Activated CD4-positive, alpha-beta memory T cell treated with anti-CD3 and anti-CD28 coated beads, Interleukin-2, amount 10 ng/mL, durations not matched to agents 7 days and 5 days (primary cell): ENCODE measurements at regions of chr7 and their contacts with region 1.

Region 1: GRCh38 chr7:142301923-142302550 is 44.2 kb upstream of the PRSS58 start:
- DNase-seq: no peak
- H3K4me3 Mint-ChIP-seq: no peak overlapping the region
- H3K27ac Mint-ChIP-seq: no peak overlapping the region
- H3K4me1 Mint-ChIP-seq: peaks cover 6% of the 10 kb centered on the region
- H3K27me3 Mint-ChIP-seq: peaks cover 16% of the 10 kb centered on the region

Region 2: DNA sequence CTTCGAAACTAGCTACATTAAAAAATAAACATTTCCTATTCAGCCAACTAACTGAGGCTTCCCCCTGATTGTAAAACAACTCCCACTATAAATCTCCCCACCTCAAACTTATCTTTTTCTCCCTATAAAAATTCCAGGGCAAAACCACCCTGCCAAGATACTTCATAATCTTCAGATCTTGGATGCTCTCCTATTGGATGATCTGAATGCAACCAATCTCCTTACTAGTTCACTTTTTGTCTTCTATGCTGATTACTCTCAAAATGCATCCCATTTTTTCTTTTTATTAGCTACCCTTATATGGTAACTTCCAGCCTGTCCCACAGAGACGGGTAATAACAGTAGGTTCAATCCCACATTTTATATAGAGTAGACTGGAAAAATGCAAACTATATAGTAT is 29.2 kb before region 1 on chr7:
- CTCF ChIA-PET with region 1: no interaction called
- POLR2A ChIA-PET with region 1: no interaction called
- DNase-seq: no peak
- H3K4me3 Mint-ChIP-seq: no peak overlapping the region
- H3K27ac Mint-ChIP-seq: no peak overlapping the region
- H3K4me1 Mint-ChIP-seq: no peaks in the 10 kb centered on the region
- H3K27me3 Mint-ChIP-seq: peaks cover 27% of the 10 kb centered on the region

Region 3: DNA sequence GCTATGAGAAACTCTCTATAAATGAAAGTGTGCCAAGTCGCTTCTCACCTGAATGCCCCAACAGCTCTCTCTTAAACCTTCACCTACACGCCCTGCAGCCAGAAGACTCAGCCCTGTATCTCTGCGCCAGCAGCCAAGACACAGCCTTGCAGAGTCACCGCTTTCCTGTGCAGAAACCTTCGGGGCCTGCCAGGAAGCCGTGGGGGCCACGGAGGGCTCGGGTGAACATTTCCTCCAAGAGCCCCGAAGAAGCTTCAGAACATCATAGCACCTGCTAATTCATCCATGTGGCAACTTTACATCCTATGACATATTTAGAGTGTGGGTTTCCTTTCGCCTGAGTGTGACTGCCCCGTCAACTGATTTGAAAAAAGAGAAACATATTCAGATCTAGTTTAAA is 11.5 kb after region 1 on chr7:
- CTCF ChIA-PET with region 1: interaction called, 27 read pairs
- POLR2A ChIA-PET with region 1: no interaction called
- DNase-seq: no peak
- H3K4me3 Mint-ChIP-seq: peak overlapping the region; percentile 5
- H3K27ac Mint-ChIP-seq: no peak overlapping the region
- H3K4me1 Mint-ChIP-seq: peaks cover 7% of the 10 kb centered on the region
- H3K27me3 Mint-ChIP-seq: peaks cover 27% of the 10 kb centered on the region

Region 4: GRCh38 chr7:142323706-142324105 is 21.7 kb after region 1 on chr7:
- CTCF ChIA-PET with region 1: interaction called, 27 read pairs
- POLR2A ChIA-PET with region 1: no interaction called
- DNase-seq: peak; percentile 48
- H3K4me3 Mint-ChIP-seq: no peak overlapping the region
- H3K27ac Mint-ChIP-seq: no peak overlapping the region
- H3K4me1 Mint-ChIP-seq: peaks cover 19% of the 10 kb centered on the region
- H3K27me3 Mint-ChIP-seq: peaks cover 10% of the 10 kb centered on the region

Region 5: GRCh38 chr7:142345811-142346210 is 43.8 kb after region 1 on chr7:
- CTCF ChIA-PET with region 1: interaction called, 12 read pairs
- POLR2A ChIA-PET with region 1: no interaction called
- DNase-seq: no peak
- H3K4me3 Mint-ChIP-seq: no peak overlapping the region
- H3K27ac Mint-ChIP-seq: peak overlapping the region; percentile 56
- H3K4me1 Mint-ChIP-seq: peaks cover 5% of the 10 kb centered on the region
- H3K27me3 Mint-ChIP-seq: peaks cover 3% of the 10 kb centered on the region

Region 6: GRCh38 chr7:142689439-142690120 is 387.5 kb after region 1 on chr7:
- CTCF ChIA-PET with region 1: no interaction called
- POLR2A ChIA-PET with region 1: no interaction called
- DNase-seq: no peak
- H3K4me3 Mint-ChIP-seq: no peak overlapping the region
- H3K27ac Mint-ChIP-seq: peak overlapping the region; percentile 77
- H3K4me1 Mint-ChIP-seq: peaks cover 41% of the 10 kb centered on the region
- H3K27me3 Mint-ChIP-seq: no peaks in the 10 kb centered on the region

Region 7: GRCh38 chr7:142733271-142733670 is 431.2 kb after region 1 on chr7:
- CTCF ChIA-PET with region 1: no interaction called
- POLR2A ChIA-PET with region 1: no interaction called
- DNase-seq: no peak
- H3K4me3 Mint-ChIP-seq: no peak overlapping the region
- H3K27ac Mint-ChIP-seq: no peak overlapping the region
- H3K4me1 Mint-ChIP-seq: no peaks in the 10 kb centered on the region
- H3K27me3 Mint-ChIP-seq: no peaks in the 10 kb centered on the region